ENCODE measurements at regions of chr5 and their contacts with region 1.

Region 1: GRCh38 chr5:135457424-135458071 is 5.4 kb upstream of the TIFAB start:
- DNase-seq: no peak
- H3K4me3 ChIP-seq: no peak overlapping the region
- CTCF ChIP-seq: peak; percentile 87

Region 2: GRCh38 chr5:135437796-135438560 is 19.6 kb before region 1 on chr5:
- CTCF ChIA-PET with region 1: interaction called, 121 read pairs
- POLR2A ChIA-PET with region 1: no interaction called
- DNase-seq: peak; percentile 68
- H3K4me3 ChIP-seq: no peak overlapping the region
- CTCF ChIP-seq: no peak

Region 3: DNA sequence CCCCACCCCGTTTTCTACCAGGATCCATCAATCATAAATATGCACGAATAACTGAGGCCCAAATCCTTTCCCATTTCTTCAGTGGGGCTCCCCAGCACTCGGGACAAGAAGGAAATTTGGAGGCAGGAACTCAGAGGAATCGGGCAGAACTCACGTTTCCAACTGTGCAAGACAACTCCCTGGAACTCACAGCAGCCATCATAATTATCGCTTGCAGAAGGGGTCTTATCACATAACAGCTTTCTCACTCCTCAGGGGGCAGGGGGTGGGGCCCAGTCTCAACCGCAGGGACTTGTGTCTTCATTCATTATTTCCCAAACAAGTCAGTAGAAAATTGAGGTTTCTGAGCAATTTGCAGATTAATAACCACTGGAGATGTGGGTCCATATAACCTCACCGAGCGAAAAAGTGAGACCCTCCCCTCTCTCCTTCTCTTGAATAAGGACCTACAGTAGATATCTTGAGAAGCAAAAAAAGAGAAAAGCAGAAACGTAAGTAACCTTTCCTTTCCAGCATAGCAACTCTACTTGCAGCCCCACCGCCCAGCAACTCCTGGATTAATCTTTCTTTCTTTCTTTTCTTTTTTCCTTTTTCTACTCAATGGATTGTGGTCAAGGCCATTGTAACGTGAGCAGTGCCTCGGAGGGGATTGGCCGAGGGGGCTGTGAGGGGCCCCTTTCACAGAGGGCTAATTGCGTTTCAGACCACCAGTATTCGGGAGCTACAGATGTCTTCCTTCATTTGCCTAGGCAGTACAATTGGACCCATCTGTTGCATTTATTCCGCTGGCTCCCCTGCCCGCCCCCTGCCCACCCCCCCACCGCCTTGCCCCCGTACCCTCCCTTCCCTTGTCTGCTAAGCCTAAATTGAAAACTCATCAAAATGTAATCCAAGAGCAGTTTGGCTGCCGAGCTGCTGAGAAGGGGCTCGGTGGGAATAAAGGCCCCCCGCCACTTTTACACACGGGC is 19.4 kb after region 1 on chr5:
- CTCF ChIA-PET with region 1: interaction called, 114 read pairs
- POLR2A ChIA-PET with region 1: no interaction called
- DNase-seq: no peak
- H3K4me3 ChIP-seq: no peak overlapping the region
- CTCF ChIP-seq: no peak

Region 4: GRCh38 chr5:135488727-135489465 is 31.3 kb after region 1 on chr5:
- CTCF ChIA-PET with region 1: interaction called, 48 read pairs
- POLR2A ChIA-PET with region 1: no interaction called
- DNase-seq: no peak
- H3K4me3 ChIP-seq: peak overlapping the region; percentile 56
- CTCF ChIP-seq: no peak

Region 5: DNA sequence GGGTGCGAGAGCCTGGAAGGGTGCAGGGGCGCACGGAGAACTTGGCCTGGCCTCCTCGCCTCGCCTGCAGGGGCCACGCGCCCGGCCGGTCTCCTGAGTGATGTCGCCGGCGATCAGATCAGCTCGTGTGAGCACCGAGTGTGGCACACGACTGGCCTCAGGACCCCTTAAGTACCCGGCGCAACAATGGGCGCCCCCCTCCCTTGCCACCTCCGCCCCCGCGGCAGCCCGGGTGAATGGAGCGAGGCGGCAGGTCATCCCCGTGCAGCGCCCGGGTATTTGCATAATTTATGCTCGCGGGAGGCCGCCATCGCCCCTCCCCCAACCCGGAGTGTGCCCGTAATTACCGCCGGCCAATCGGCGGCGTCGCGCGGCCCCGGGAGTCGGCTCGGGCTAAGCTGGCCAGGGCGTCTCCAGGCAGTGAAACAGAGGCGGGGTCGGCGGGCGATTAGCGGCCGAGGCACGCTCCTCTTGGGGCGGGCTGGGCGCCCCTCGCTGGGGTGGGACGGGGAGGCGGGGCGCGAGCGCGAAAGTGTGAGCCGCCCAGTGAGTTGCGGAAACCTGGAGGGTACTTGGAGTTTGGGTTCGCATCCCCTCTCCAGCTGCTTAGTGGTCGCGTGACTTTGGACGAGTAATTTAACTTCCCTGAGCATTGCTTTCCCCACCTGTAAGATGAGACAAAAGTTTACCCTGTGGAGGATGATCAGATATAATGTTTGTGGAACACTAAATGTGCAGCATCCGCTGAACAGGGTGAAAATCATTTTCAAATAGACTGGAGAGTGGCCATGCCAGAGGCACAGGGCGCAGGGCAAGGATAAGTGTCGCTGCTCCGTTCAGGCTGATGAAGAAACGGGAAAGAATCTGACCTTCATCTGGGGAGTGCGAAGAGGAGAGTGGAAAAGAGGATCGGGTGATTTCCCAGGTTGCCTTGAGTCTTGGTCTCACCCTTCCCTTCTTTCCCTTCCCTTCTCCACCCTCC is 78.6 kb after region 1 on chr5 and contains the start of gene NEUROG1:
- CTCF ChIA-PET with region 1: interaction called, 11 read pairs
- POLR2A ChIA-PET with region 1: no interaction called
- DNase-seq: no peak
- H3K4me3 ChIP-seq: no peak within 1 kb of the TSS
- CTCF ChIP-seq: no peak